Mammary epithelial cell (primary cell): ENCODE measurements at regions of chr9 and their contacts with region 1.

Region 1: GRCh38 chr9:88476491-88477271 is 58.3 kb upstream of the NXNL2 start:
- DNase-seq: no peak
- H3K4me3 ChIP-seq: no peak overlapping the region
- H3K27ac ChIP-seq: peak overlapping the region; percentile 50
- H3K4me1 ChIP-seq: peaks cover 28% of the 10 kb centered on the region
- H3K27me3 ChIP-seq: no peaks in the 10 kb centered on the region
- CTCF ChIP-seq: no peak

Region 2: DNA sequence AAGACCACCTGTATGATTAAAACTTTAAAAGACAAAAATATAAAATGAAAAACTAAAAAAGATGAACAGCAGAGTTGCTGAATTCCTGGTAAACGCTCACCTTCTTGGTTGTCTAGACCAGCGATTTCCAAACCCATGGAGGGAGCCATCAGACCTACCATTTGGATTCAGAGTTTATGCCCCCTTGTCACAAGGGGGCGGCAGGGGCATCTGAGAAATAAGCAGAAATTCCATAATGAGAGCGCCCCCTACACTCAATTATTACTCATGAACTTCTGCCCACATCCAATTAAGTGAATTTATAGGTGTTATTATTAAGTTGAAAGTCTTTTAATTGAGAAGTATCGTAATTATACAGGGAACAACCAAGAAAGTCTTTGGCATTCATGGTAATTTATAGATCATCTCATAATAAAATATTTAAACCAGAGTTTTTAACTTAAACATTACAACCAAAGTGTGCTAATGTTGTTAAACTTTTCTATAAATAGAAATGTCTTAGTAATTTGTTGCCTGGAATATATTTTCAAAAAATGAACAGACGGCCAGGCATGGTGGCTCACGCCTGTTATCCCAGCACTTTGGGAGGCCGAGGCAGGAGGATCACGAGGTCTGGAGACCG is 303.2 kb before region 1 on chr9:
- CTCF ChIA-PET with region 1: no interaction called
- dilution Hi-C with region 1: no loop called
- in situ Hi-C with region 1: no loop called
- intact Hi-C with region 1: loop called (anchors 5 kb)
- DNase-seq: peak; percentile 67
- H3K4me3 ChIP-seq: no peak overlapping the region
- H3K27ac ChIP-seq: no peak overlapping the region
- H3K4me1 ChIP-seq: no peaks in the 10 kb centered on the region
- H3K27me3 ChIP-seq: no peaks in the 10 kb centered on the region
- CTCF ChIP-seq: peak; percentile 80 to 84

Region 3: GRCh38 chr9:88425538-88425950 is 51.1 kb before region 1 on chr9:
- CTCF ChIA-PET with region 1: no interaction called
- dilution Hi-C with region 1: no loop called
- in situ Hi-C with region 1: no loop called
- intact Hi-C with region 1: loop called (anchors 5 kb)
- DNase-seq: no peak
- H3K4me3 ChIP-seq: no peak overlapping the region
- H3K27ac ChIP-seq: no peak overlapping the region
- H3K4me1 ChIP-seq: no peaks in the 10 kb centered on the region
- H3K27me3 ChIP-seq: no peaks in the 10 kb centered on the region
- CTCF ChIP-seq: no peak

Region 4: DNA sequence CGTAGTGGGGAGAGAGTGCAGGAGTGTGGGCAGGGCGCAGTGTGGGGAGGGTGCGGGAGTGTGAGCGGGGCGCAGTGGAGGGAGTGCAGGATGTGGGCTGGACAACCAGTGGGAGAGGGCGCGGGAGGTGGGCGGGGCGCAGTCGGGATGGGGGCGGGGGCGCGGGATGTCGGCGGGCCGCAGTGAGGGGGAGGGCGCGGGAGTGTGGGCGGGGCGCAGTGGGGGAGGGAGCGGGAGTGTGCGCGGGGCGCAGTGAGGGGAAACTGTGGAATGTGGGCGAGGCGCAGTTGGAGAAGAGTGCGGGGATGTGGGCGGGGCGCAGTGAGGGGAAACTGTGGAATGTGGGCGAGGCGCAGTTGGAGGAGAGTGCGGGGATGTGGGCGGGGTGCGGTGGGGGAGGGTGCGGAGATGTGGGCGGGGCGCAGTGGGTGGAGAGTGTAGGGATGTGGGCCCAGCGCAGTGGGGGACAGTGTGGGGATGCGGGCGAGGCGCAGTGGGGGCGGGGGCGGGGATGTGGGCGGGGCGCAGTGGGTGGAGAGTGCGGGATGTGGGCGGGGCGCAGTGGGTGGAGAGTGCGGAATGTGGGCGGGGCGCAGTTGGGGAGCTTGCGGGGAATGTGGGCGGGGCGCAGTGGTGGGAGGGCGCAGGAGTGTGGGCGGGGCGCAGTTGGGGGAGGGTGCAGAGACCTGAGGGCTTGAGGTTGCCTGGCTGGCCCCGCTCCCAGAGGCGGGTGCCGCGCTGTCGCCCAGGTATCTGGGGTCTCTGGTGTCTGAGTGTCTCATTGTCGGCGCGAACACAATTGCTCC is 58.0 kb after region 1 on chr9 and contains the start of gene NXNL2:
- CTCF ChIA-PET with region 1: no interaction called
- dilution Hi-C with region 1: loop called (anchors 10 kb)
- in situ Hi-C with region 1: no loop called
- intact Hi-C with region 1: no loop called
- DNase-seq: peak; percentile 56
- H3K4me3 ChIP-seq: peak within 1 kb of the TSS; percentile 55 to 70 (median 64)
- H3K27ac ChIP-seq: no peak within 1 kb of the TSS
- H3K4me1 ChIP-seq: peaks cover 20% of the 10 kb centered on the region
- H3K27me3 ChIP-seq: no peaks in the 10 kb centered on the region
- CTCF ChIP-seq: no peak
- total RNA-seq, gene NXNL2: 0.31 to 1.0 TPM

Region 5: DNA sequence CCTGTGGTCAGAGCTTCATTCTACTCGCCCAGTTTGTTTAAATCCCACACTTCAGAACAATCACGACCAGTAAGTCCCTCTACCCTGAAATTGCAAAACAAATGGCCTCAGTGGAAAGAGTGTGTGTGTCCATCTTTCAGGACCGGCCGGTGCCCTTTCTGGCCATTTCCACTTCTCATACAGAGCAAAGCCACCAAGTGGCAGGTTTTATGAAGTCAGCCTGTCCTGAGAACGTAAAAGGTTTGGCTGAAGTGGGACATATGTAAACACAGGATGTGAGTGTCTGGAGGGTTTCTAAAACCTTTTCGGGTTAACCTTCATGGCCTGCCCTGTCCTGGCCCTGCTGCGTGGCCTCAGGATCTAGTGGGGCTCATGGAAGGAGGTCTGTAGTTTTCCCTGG is 83.0 kb after region 1 on chr9:
- CTCF ChIA-PET with region 1: no interaction called
- dilution Hi-C with region 1: no loop called
- in situ Hi-C with region 1: no loop called
- intact Hi-C with region 1: no loop called
- DNase-seq: no peak
- H3K4me3 ChIP-seq: no peak overlapping the region
- H3K27ac ChIP-seq: no peak overlapping the region
- H3K4me1 ChIP-seq: no peaks in the 10 kb centered on the region
- H3K27me3 ChIP-seq: no peaks in the 10 kb centered on the region
- CTCF ChIP-seq: no peak